ENCODE measurements at regions of chr6 and their contacts with region 1.

Region 1: GRCh38 chr6:50816115-50816675 is 2.5 kb upstream of the TFAP2B start:
- DNase-seq: peak; percentile 88
- H3K4me3 ChIP-seq: peak overlapping the region; percentile 51
- H3K27ac ChIP-seq: no peak overlapping the region
- H3K4me1 ChIP-seq: peaks cover 13% of the 10 kb centered on the region
- H3K27me3 ChIP-seq: peaks cover 72% of the 10 kb centered on the region
- CTCF ChIP-seq: peak; percentile 87

Region 2: DNA sequence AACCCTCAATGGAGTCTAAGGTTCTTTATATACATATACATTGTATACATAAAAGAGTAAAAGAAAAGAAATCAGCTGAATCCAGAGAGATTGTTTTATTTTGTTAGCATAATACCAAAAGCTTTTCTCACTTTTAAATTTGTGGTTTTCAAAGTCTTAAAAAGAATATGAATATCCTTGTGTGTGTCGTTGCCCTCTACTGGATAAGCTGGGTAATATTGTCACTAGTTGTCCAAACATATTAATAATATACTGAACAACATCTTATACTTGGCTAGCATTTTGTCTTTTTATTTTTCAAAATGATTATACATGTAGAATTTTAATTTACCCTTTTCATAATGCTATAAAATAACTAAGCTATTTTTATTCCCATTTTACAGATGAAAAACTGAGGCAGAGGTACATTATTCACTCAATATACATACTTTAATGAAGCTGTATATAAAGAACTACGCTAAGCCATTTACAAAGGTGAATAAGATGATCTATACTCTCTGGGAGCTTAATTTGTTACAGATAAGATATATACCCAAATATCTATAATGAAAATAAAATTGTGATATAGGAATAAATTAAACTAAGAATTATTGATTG is 534.2 kb after region 1 on chr6:
- CTCF ChIA-PET with region 1: interaction called, 4 read pairs
- POLR2A ChIA-PET with region 1: no interaction called
- intact Hi-C with region 1: loop called (anchors 1 kb)
- DNase-seq: peak; percentile 27
- H3K4me3 ChIP-seq: no peak overlapping the region
- H3K27ac ChIP-seq: no peak overlapping the region
- H3K4me1 ChIP-seq: no peaks in the 10 kb centered on the region
- H3K27me3 ChIP-seq: no peaks in the 10 kb centered on the region
- CTCF ChIP-seq: peak; percentile 60

Region 3: GRCh38 chr6:51753635-51754034 is 937.4 kb after region 1 on chr6:
- CTCF ChIA-PET with region 1: no interaction called
- POLR2A ChIA-PET with region 1: no interaction called
- intact Hi-C with region 1: loop called (anchors 5 kb)
- DNase-seq: peak; percentile 55
- H3K4me3 ChIP-seq: no peak overlapping the region
- H3K27ac ChIP-seq: no peak overlapping the region
- H3K4me1 ChIP-seq: no peaks in the 10 kb centered on the region
- H3K27me3 ChIP-seq: no peaks in the 10 kb centered on the region
- CTCF ChIP-seq: peak; percentile 81

Region 4: DNA sequence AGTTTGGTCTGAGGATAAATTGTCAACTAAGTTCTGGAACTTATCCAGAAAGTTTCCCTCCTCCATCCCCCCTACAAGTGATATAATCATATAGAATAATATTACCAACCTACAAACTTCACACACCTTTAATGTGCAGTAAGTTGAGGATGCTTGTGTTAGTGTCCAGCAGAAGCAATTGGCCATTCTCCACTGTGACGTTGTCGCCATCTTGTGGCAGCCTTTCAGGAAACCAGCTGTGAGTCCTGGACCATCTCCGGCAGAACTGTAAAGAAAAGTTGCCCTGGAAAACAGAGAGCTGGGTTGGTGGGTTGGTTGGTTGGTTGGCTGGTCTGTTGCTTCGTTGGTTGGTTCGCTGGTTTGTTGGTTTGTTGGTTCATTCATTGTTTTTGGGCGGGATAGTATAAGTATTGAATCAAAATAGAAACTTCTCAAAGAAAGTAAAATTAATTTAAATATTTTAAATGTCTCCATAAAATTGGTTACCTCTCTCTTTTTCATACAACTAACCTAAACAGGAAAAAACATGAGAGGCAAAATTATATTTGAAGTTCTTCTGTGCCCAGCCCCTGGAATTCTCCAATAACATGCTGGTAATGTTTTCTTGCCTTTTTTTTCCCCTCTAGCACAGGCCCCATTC is 1143.7 kb after region 1 on chr6:
- CTCF ChIA-PET with region 1: no interaction called
- POLR2A ChIA-PET with region 1: no interaction called
- intact Hi-C with region 1: loop called (anchors 5 kb)
- DNase-seq: peak; percentile 79
- H3K4me3 ChIP-seq: no peak overlapping the region
- H3K27ac ChIP-seq: no peak overlapping the region
- H3K4me1 ChIP-seq: no peaks in the 10 kb centered on the region
- H3K27me3 ChIP-seq: no peaks in the 10 kb centered on the region
- CTCF ChIP-seq: peak; percentile 92

Region 5: GRCh38 chr6:52049252-52050050 is 1233.3 kb after region 1 on chr6:
- CTCF ChIA-PET with region 1: no interaction called
- POLR2A ChIA-PET with region 1: no interaction called
- intact Hi-C with region 1: loop called (anchors 1 kb)
- DNase-seq: peak; percentile 77
- H3K4me3 ChIP-seq: no peak overlapping the region
- H3K27ac ChIP-seq: no peak overlapping the region
- H3K4me1 ChIP-seq: peaks cover 29% of the 10 kb centered on the region
- H3K27me3 ChIP-seq: no peaks in the 10 kb centered on the region
- CTCF ChIP-seq: peak; percentile 83

Measured in A673 (cell line).